Naive thymus-derived CD4-positive, alpha-beta T cell (primary cell): ENCODE measurements at regions of chr17 and their contacts with region 1.

Region 1: GRCh38 chr17:60599620-60600489 is at the start of gene PPM1D:
- DNase-seq: peak; percentile 92 to 97 (median 95)
- ATAC-seq: peak; percentile 97
- H3K4me3 ChIP-seq: peak within 1 kb of the TSS; percentile 70
- H3K4me3 Mint-ChIP-seq: peak within 1 kb of the TSS; percentile 93 to 99 (median 97)
- H3K27ac ChIP-seq: peak within 1 kb of the TSS; percentile 88
- H3K27ac Mint-ChIP-seq: peak within 1 kb of the TSS; percentile 91 to 99 (median 95)
- H3K4me1 ChIP-seq: peaks cover 0 to 13% of the 10 kb centered on the region in 2 donors
- H3K4me1 Mint-ChIP-seq: peaks cover 33 to 55% (median 43%) of the 10 kb centered on the region in 7 donors
- H3K27me3 ChIP-seq: no peaks in the 10 kb centered on the region
- H3K27me3 Mint-ChIP-seq: no peaks in the 10 kb centered on the region
- total RNA-seq, gene PPM1D: 13.5 to 18.8 (median 17.7) TPM

Region 2: DNA sequence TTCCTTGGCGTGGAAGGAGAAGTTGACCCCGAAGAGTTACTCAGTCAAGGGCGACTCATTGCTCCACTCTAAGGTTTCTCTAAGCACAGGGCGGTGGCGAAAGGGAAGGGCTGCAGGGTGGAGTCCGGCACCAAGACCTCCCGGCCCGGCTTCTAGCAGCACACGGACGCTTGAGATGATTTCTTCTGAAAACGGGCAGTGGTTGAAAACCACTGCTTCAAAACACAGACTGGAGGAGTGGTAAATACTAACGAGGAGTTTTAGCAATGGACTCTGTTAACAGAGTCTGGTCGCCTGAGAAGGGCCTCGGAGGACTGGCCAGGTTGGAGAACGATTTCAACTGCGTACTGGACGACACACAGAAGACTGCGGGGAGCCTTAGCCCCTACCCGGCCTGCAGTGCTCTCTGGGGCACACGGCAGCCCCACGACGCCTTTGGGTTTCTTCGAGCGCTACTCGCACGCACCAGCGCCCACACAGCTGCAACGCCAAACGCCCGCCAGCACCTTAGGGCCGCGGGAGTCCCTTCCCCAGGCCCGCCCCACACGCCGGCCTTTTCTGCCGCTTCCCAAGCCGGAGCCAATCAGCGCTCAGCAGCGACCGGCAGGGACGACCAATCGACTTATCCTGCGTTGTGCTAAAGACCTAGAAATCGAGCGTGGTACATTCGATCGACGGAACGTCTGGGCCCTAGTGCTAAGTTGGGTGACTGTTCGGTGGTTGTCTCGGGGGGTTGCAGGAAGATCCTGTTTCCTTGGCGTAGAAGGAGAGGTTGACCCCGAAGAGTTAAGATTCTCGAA is 464.5 kb before region 1 on chr17:
- CTCF ChIA-PET with region 1: no interaction called
- POLR2A ChIA-PET with region 1: no interaction called
- intact Hi-C with region 1: loop called in 1 of 2 experiments (anchors 10 kb)
- DNase-seq: peak; percentile 52 to 85 (median 67)
- ATAC-seq: peak; percentile 93
- H3K4me3 ChIP-seq: peak overlapping the region; percentile 71
- H3K4me3 Mint-ChIP-seq: peak overlapping the region; percentile 90 to 98 (median 96)
- H3K27ac ChIP-seq: peak overlapping the region; percentile 47
- H3K27ac Mint-ChIP-seq: peak overlapping the region; percentile 12 to 93 (median 72)
- H3K4me1 ChIP-seq: peaks cover 3 to 12% of the 10 kb centered on the region in 2 donors
- H3K4me1 Mint-ChIP-seq: peaks cover 18 to 36% (median 34%) of the 10 kb centered on the region in 7 donors
- H3K27me3 ChIP-seq: peaks cover 3 to 12% of the 10 kb centered on the region in 2 donors
- H3K27me3 Mint-ChIP-seq: peaks cover 14 to 42% (median 29%) of the 10 kb centered on the region in 5 donors

Region 3: DNA sequence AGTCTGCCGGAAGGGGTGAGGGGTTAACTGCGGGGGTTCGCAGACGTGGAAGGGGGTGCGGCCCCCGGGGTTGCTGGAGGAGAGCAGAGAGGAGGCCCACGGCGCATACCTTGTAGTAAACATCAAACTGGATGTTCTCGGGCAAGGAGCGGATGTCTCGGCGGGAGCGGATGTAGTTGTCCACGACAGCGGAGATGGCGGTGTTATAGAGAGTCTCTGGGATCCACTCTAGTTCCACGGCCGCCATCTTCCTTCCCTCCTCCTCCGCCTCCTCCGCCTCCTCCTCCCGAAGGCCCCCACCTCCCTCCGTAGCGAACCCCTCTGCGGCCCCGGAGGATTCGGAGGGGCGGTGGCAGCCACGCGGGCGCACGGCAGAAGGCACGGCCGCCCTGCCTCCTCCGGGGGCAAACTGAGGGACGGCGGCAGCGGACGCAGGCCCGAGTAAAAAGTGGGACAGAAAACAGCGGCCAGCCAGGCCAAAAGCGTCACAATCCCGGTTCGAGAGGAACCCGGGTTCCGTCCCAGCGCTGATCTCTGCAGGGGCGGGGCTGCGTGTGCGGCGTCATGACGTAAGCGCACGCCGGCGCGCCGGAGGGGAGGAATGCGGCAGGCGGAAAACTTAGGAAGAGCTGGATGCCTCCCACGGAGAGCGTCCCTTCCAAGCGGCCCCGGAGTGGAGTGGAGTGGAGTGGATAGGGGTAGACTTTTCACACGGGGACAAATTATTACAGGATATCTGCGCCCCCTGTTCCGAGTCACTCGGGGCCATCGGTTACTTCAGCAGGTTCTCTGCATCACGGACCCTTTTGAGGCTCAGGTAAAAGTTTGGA is 74.0 kb before region 1 on chr17 and contains the start of gene APPBP2:
- CTCF ChIA-PET with region 1: no interaction called
- POLR2A ChIA-PET with region 1: interaction called, 3 read pairs
- intact Hi-C with region 1: loop called (anchors 1 kb)
- DNase-seq: peak; percentile 59 to 80 (median 77)
- ATAC-seq: peak; percentile 92
- H3K4me3 ChIP-seq: peak within 1 kb of the TSS; percentile 86
- H3K4me3 Mint-ChIP-seq: peak within 1 kb of the TSS; percentile 98 to 100 (median 99)
- H3K27ac ChIP-seq: peak within 1 kb of the TSS; percentile 99
- H3K27ac Mint-ChIP-seq: peak within 1 kb of the TSS; percentile 96 to 99 (median 98)
- H3K4me1 ChIP-seq: peaks cover 19 to 25% of the 10 kb centered on the region in 2 donors
- H3K4me1 Mint-ChIP-seq: peaks cover 31 to 63% (median 55%) of the 10 kb centered on the region in 7 donors
- H3K27me3 ChIP-seq: no peaks in the 10 kb centered on the region
- H3K27me3 Mint-ChIP-seq: no peaks in the 10 kb centered on the region
- total RNA-seq, gene APPBP2: 24.2 to 47.5 (median 33.0) TPM

Region 4: DNA sequence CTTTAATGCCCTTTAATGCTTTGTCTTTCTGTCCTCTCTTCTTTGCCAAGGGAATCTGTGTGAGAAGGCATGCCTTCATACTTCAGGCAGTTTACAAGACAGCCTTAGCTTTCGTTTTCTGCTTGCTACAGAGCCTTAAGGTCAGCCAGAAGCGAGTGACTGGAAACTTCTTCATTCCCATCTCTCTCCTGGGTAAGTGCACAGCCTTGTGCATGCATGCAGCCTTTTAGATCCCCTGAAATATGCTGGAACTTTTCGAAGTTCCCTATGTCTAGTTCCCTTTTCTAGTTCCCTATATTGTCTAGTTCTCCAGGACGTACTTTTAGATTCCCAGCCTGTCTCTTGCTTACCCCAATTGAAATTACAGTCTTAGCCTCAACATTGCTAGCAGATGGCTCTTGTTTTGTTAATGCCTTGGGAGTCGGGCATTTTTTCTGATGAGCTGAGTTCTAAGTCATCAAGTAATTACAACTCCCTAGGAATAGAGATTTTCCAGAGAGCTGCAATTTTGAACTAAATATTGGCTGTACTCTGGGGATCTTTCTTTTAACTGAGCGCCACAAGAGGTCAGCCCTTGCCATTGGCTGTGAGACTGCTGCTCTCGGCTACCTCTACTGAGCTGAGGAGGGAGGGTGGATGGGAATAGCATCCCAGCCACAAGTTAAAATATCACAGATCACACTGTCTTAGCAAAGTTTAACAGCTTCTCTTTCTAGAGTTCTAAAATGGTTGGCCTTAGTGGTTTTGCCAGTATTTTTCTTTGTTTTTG is 22.5 kb before region 1 on chr17:
- CTCF ChIA-PET with region 1: interaction called, 3 read pairs
- POLR2A ChIA-PET with region 1: interaction called, 6 read pairs
- intact Hi-C with region 1: loop called (anchors 1 to 2 kb)
- DNase-seq: peak in 4 of 9 donors; percentile 4 to 14 (median 10)
- ATAC-seq: peak; percentile 70
- H3K4me3 ChIP-seq: peak overlapping the region; percentile 47
- H3K4me3 Mint-ChIP-seq: peak overlapping the region; percentile 49 to 92 (median 84)
- H3K27ac ChIP-seq: no peak overlapping the region
- H3K27ac Mint-ChIP-seq: peak overlapping the region in 6 of 9 donors; percentile 6 to 47 (median 32)
- H3K4me1 ChIP-seq: no peaks in the 10 kb centered on the region
- H3K4me1 Mint-ChIP-seq: peaks cover 3 to 10% (median 8%) of the 10 kb centered on the region in 7 donors
- H3K27me3 ChIP-seq: no peaks in the 10 kb centered on the region
- H3K27me3 Mint-ChIP-seq: peaks cover 0 to 3% (median 0%) of the 10 kb centered on the region in 5 donors

Region 5: GRCh38 chr17:60641810-60642220 is 42.0 kb after region 1 on chr17:
- CTCF ChIA-PET with region 1: interaction called, 7 read pairs
- POLR2A ChIA-PET with region 1: no interaction called
- intact Hi-C with region 1: loop called (anchors 1 kb)
- DNase-seq: peak in 8 of 9 donors; percentile 22 to 63 (median 50)
- ATAC-seq: peak; percentile 49
- H3K4me3 ChIP-seq: no peak overlapping the region
- H3K4me3 Mint-ChIP-seq: no peak overlapping the region
- H3K27ac ChIP-seq: no peak overlapping the region
- H3K27ac Mint-ChIP-seq: peak overlapping the region in 1 of 9 donors; percentile 46
- H3K4me1 ChIP-seq: no peaks in the 10 kb centered on the region
- H3K4me1 Mint-ChIP-seq: peaks cover 4 to 22% (median 14%) of the 10 kb centered on the region in 7 donors
- H3K27me3 ChIP-seq: no peaks in the 10 kb centered on the region
- H3K27me3 Mint-ChIP-seq: no peaks in the 10 kb centered on the region

Region 6: DNA sequence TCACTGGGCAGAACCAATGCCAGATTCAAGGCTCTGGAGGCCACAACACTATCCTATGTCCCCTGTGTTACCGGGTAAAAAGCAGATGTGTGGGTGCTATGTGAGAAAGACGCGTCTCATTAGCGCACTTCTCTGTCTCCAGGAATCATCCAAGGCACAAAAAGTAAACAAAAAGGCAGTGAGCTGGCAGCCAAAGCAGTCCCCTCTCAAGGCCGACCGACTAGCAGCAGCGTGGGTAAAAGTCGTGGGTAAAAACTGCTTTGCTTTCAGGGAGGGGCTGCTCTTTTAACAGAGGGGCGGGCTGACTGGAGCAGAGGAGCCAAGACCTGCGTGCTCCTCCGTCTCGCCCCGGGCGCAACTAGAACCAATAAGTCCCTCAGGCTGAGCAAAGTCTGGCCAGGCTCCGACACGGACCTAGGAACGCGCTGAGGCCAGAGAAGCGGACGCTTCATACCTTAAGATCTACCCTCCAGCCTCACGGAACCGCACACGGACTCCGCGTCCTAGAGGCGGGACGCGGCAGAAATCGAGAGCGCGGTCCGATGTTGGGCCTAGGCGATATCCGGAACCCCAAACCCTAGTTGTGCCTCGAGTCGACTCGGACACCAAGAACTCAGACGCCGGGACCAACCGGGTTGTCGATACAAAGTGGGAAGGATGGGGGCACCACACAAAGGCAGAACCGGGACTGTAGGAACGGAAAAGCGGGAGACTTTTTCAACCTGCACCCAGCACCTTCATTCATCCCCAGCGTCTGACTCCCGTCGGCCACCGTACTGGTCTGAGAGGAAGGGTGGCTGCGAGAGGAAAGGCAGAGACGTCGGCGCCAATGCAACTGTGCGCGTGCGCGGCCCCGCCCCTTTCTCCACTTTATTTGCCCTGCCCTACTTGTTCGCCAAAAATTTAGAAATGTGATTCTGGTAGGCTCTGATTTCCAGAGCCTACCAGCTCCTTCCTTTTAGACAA is 1327.6 kb after region 1 on chr17 and contains the start of gene INTS2:
- CTCF ChIA-PET with region 1: no interaction called
- POLR2A ChIA-PET with region 1: no interaction called
- intact Hi-C with region 1: loop called in 1 of 2 experiments (anchors 5 kb)
- DNase-seq: peak; percentile 90 to 96 (median 94)
- ATAC-seq: peak; percentile 95
- H3K4me3 ChIP-seq: peak within 1 kb of the TSS; percentile 98
- H3K4me3 Mint-ChIP-seq: peak within 1 kb of the TSS; percentile 88 to 96 (median 92)
- H3K27ac ChIP-seq: peak within 1 kb of the TSS; percentile 80
- H3K27ac Mint-ChIP-seq: peak within 1 kb of the TSS; percentile 90 to 98 (median 94)
- H3K4me1 ChIP-seq: peaks cover 11 to 19% of the 10 kb centered on the region in 2 donors
- H3K4me1 Mint-ChIP-seq: peaks cover 13 to 28% (median 21%) of the 10 kb centered on the region in 7 donors
- H3K27me3 ChIP-seq: no peaks in the 10 kb centered on the region
- H3K27me3 Mint-ChIP-seq: peaks cover 0 to 3% (median 0%) of the 10 kb centered on the region in 5 donors
- total RNA-seq, gene INTS2: 14.9 to 24.4 (median 19.2) TPM